ENCODE measurements at regions of chrX and their contacts with region 1.

Region 1: GRCh38 chrX:109485470-109486340 is 3.8 kb upstream of the GUCY2F start:
- DNase-seq: peak; percentile 7 to 70 (median 50)
- ATAC-seq: peak; percentile 92
- H3K4me3 ChIP-seq: no peak overlapping the region
- H3K4me3 Mint-ChIP-seq: no peak overlapping the region
- H3K27ac ChIP-seq: no peak overlapping the region
- H3K27ac Mint-ChIP-seq: no peak overlapping the region
- H3K4me1 ChIP-seq: no peaks in the 10 kb centered on the region
- H3K4me1 Mint-ChIP-seq: peaks cover 0 to 2% (median 0%) of the 10 kb centered on the region in 7 donors
- H3K27me3 ChIP-seq: no peaks in the 10 kb centered on the region
- H3K27me3 Mint-ChIP-seq: peaks cover 0 to 14% (median 0%) of the 10 kb centered on the region in 5 donors

Region 2: GRCh38 chrX:109089359-109089758 is 396.3 kb before region 1 on chrX:
- CTCF ChIA-PET with region 1: no interaction called
- POLR2A ChIA-PET with region 1: no interaction called
- intact Hi-C with region 1: no loop called
- DNase-seq: no peak
- ATAC-seq: no peak
- H3K4me3 ChIP-seq: no peak overlapping the region
- H3K4me3 Mint-ChIP-seq: no peak overlapping the region
- H3K27ac ChIP-seq: no peak overlapping the region
- H3K27ac Mint-ChIP-seq: no peak overlapping the region
- H3K4me1 ChIP-seq: no peaks in the 10 kb centered on the region
- H3K4me1 Mint-ChIP-seq: peaks cover 0 to 1% (median 0%) of the 10 kb centered on the region in 7 donors
- H3K27me3 ChIP-seq: no peaks in the 10 kb centered on the region
- H3K27me3 Mint-ChIP-seq: no peaks in the 10 kb centered on the region

Region 3: DNA sequence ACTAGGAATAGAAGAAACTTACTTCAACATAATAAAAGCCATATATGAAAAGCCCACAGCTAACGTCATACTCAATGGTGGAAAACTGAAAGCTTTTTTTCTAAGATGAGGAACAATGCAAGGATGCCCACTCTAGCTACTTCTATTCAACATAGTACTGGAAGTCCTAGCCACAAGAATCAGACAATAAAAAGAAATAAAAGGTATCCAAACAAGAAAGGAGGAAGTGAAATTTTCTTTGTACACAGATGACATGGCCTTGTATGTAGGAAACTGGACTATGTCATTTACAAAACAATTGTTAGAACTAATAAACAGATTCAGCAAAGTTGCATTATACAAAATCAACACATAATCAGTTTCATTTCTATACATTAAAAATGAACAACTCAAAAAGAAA is 25.4 kb after region 1 on chrX:
- CTCF ChIA-PET with region 1: no interaction called
- POLR2A ChIA-PET with region 1: no interaction called
- intact Hi-C with region 1: no loop called
- DNase-seq: no peak
- ATAC-seq: no peak
- H3K4me3 ChIP-seq: no peak overlapping the region
- H3K4me3 Mint-ChIP-seq: no peak overlapping the region
- H3K27ac ChIP-seq: no peak overlapping the region
- H3K27ac Mint-ChIP-seq: no peak overlapping the region
- H3K4me1 ChIP-seq: no peaks in the 10 kb centered on the region
- H3K4me1 Mint-ChIP-seq: no peaks in the 10 kb centered on the region
- H3K27me3 ChIP-seq: no peaks in the 10 kb centered on the region
- H3K27me3 Mint-ChIP-seq: peaks cover 21 to 42% (median 31%) of the 10 kb centered on the region in 5 donors

Region 4: GRCh38 chrX:109635176-109635575 is 149.5 kb after region 1 on chrX:
- CTCF ChIA-PET with region 1: interaction called, 9 read pairs
- POLR2A ChIA-PET with region 1: no interaction called
- intact Hi-C with region 1: loop called (anchors 1 to 2 kb)
- DNase-seq: no peak
- ATAC-seq: no peak
- H3K4me3 ChIP-seq: no peak overlapping the region
- H3K4me3 Mint-ChIP-seq: no peak overlapping the region
- H3K27ac ChIP-seq: no peak overlapping the region
- H3K27ac Mint-ChIP-seq: no peak overlapping the region
- H3K4me1 ChIP-seq: no peaks in the 10 kb centered on the region
- H3K4me1 Mint-ChIP-seq: peaks cover 0 to 26% (median 5%) of the 10 kb centered on the region in 7 donors
- H3K27me3 ChIP-seq: no peaks in the 10 kb centered on the region
- H3K27me3 Mint-ChIP-seq: no peaks in the 10 kb centered on the region

Region 5: DNA sequence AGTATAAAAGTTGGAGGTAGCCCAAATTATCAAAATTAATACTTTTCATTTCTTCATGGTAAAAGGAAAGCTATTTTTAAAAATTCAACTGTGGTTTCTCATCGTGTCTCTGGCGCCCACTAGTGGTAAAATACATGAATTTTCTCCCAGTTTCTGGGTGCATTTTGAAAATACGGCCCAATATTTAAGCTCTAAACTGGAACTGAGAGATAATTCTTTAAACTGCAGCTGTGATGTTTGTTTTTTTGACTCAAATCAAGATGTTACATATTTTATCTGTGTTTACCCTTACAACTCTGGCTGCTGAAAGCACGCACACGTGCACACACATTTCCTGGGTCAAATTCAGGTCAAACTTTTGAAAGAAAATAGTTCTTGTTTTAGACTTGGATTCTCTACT is 371.3 kb after region 1 on chrX:
- CTCF ChIA-PET with region 1: no interaction called
- POLR2A ChIA-PET with region 1: no interaction called
- intact Hi-C with region 1: loop called (anchors 1 to 2 kb)
- DNase-seq: peak in 6 of 9 donors; percentile 7 to 47 (median 42)
- ATAC-seq: no peak
- H3K4me3 ChIP-seq: no peak overlapping the region
- H3K4me3 Mint-ChIP-seq: peak overlapping the region in 1 of 10 donors; percentile 2
- H3K27ac ChIP-seq: no peak overlapping the region
- H3K27ac Mint-ChIP-seq: no peak overlapping the region
- H3K4me1 ChIP-seq: no peaks in the 10 kb centered on the region
- H3K4me1 Mint-ChIP-seq: peaks cover 0 to 2% (median 0%) of the 10 kb centered on the region in 7 donors
- H3K27me3 ChIP-seq: no peaks in the 10 kb centered on the region
- H3K27me3 Mint-ChIP-seq: no peaks in the 10 kb centered on the region

Region 6: DNA sequence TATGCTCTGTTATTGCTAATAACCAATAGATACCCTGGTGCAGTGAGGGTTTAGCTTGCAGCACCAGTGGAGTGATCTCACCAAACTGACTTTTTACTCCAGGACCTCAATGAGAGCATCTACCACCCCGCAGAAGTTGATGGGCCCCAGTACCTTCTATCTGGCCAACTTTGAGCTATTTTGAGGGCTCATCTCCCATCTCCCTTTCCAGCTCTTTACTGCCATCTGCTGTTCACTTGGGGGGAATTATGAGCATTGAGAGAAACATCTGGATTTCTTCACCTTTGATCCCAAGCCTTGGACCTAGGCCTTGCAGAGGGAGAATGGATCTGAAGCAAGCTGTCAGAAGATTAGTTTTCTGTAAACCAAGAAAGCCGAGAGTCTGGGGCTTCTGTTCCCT is 660.8 kb after region 1 on chrX:
- CTCF ChIA-PET with region 1: no interaction called
- POLR2A ChIA-PET with region 1: no interaction called
- intact Hi-C with region 1: loop called in 1 of 2 experiments (anchors 10 kb)
- DNase-seq: peak in 5 of 9 donors; percentile 17 to 45 (median 33)
- ATAC-seq: peak; percentile 61
- H3K4me3 ChIP-seq: no peak overlapping the region
- H3K4me3 Mint-ChIP-seq: no peak overlapping the region
- H3K27ac ChIP-seq: no peak overlapping the region
- H3K27ac Mint-ChIP-seq: no peak overlapping the region
- H3K4me1 ChIP-seq: peaks cover 0 to 4% of the 10 kb centered on the region in 2 donors
- H3K4me1 Mint-ChIP-seq: peaks cover 0 to 10% (median 5%) of the 10 kb centered on the region in 7 donors
- H3K27me3 ChIP-seq: no peaks in the 10 kb centered on the region
- H3K27me3 Mint-ChIP-seq: no peaks in the 10 kb centered on the region